Posterior cingulate gyrus (tissue), 11 donors: ENCODE measurements at regions of chr2 and their contacts with region 1.

Region 1: DNA sequence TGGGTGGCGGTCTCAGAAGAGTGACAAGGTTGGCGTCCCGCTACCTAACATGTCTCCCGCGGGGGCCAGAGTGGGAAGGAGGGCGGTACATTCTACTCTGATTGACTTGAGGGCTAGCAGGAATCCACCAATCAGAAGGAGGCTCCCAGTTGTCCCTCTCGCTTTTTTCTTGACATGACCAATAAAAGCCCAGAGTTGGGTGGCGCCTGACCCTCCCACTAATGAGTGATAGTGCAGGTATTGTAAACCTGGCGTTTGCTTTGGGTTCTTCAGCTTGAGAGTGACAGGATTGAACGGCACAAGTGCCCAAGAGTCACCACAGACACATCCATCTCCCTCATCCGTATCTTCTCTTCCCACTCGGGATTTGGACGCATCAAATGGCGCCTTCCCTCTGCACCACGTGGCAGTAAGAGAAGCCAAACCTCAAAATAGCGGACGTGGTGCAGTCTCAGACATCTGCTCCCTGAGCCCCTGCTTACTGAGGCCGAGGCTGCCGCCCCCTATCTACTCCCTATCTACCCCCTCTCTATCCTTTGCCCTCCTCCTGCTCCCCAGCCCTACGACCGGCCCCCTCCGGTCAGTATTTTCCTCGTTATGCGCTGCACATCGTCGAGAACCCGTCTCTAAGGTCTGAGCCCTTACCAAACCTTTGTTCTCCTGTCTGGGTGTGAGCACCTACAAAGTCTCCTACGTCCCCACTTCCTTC is 768 bp upstream of the FAM161A start:
- DNase-seq: peak; percentile 80 to 98 (median 89)

Region 2: DNA sequence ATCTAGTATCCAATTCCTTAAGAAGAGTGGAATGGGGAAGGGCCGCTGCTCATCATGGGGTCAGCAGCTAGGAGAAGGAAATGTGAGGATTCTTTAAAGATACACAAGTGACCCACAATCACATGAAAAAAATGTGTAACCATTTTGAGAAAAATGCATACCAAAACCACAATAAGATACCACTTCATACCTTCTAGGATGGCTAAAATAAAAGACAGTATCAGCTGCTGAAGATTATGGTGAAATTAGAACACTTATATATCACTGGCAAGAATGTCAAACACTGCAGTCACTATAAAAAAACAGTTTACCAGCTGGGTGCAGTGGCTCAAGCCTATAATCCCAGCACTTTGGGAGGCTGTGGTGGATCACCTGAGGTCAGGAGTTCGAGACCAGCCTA is 624.7 kb before region 1 on chr2:
- intact Hi-C with region 1: no loop called
- DNase-seq: no peak

Region 3: DNA sequence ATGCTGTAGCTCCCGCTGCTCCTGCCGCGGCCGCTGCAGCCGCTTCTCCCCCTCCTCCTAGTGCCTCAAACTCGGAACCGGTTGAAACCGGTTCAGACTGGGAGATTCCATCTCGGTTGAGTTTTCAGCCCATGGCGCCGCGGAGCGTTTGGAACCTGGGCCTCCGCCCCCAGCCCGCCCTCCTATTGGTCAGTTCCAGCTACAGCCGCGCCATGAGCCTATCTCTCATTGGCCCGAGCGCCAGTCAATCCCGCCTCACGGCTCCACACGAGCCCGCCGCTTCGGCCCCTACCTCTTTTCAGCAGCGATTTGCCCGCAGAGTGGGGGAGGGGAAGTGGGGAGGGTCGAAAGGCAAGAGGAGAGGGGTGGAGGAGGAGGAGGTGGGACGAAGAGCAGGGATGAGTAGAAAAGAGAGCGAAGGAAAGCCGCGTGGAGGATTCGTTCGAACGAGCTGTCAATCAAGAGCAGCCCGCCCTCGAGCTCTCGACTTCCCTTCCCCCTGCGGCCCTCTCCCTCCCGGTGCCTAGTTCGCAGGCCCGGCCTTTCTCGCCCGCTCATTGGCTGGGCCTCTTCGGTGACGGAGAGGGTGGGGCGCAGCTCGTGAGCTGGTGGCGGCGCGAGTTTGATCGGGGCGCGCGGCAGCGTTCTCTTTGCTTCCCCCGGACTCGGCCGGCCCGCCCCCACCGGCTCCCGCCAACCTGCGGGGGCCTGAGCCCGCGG is 316.3 kb before region 1 on chr2 and contains the start of gene XPO1:
- intact Hi-C with region 1: loop called (anchors 10 kb)
- DNase-seq: peak; percentile 99 to 100 (median 100)

Region 4: DNA sequence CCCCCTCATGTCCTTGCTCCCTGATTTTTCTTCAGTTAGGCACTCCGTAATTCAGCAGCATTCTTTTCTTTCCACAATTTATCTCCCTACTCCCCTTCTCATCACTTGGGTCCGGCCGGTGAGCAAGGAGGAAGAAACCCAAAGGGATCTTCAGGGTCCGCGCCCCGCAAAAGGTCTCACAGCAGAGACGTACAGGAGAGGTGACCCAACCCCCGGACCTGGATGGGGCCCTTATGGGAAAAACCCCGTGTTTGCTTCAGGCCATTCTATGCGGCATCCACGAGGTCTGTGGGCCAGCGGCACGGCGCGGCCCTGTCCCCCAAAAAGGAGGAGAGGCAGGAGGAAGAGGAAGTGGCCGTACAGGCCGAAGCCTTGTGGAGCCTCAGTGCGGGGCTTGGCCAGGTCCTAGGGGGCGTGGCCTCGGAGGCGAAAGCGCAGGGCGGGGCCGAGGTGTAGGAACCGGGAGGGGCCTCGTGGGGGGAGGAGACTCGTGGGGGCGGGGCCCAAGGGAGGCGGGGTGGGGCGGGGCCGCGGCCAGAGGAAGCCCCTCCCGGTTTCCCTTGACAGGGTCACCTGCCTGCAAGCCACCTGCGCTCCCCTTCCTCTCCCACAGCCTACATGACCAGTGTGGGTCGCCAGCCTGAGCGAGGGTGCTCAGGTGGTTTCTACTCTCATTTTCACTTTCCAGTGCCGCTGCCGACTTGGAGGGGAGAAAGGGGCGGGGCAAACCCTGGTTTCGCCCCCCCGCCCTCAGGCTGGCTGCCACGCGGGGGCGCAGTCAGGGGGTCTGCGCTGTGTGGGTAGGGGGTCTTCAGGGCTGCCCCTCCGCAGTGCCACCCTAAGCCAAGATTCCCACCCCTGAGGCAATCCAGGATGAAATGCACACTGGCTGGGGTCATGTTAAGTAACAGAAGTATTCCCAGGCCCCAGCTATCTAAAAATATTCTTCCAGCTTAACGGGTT is 160.0 kb before region 1 on chr2:
- intact Hi-C with region 1: loop called (anchors 5 kb)
- DNase-seq: peak; percentile 86 to 99 (median 92)

Region 5: DNA sequence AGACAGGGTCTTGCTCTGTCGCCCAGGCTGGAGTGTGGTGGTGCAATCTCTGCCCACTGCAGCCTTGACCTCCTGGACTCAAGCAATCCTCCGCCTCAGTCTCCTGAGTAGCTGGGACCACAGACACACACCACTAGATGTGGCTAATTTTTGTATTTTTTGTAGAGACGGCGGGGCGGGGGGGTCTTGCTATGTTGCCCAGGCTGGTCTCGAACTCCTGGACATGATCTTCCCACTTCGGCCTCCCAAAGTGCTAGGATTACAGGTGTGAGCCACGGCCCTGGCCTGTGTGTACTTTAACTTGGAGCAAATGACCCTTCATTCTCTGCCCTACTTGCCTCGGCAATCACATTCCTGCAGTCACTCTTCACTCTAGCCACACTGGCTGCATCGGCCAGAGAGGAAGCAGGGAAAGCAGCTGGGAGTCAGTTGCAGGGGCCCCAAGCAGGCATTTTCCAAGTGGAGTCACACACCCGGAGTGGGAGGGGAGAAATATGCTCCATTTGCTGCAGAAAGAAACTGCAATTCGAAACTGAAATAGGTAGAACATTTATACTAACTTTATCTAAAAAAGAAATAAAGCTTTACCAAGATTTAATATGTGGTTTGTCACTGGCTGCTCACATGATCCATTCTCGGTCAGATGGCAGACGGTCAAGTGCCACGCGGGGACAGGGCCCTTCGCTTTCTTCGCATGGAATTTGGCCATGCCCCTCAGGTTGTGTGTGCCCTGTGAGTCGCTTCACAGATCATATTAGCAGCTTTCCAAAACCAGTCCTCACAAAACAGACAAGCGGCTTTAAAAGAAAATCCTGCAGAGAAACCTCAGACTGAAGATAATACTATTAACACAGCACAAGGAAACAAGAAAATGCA is 37.9 kb before region 1 on chr2:
- intact Hi-C with region 1: no loop called
- DNase-seq: no peak

Region 6: GRCh38 chr2:61888267-61889055 is 33.8 kb after region 1 on chr2 and contains the start of gene CCT4:
- intact Hi-C with region 1: loop called (anchors 2 kb)
- DNase-seq: peak; percentile 81 to 98 (median 88)